ENCODE measurements at regions of chr17 and their contacts with region 1.

Region 1: DNA sequence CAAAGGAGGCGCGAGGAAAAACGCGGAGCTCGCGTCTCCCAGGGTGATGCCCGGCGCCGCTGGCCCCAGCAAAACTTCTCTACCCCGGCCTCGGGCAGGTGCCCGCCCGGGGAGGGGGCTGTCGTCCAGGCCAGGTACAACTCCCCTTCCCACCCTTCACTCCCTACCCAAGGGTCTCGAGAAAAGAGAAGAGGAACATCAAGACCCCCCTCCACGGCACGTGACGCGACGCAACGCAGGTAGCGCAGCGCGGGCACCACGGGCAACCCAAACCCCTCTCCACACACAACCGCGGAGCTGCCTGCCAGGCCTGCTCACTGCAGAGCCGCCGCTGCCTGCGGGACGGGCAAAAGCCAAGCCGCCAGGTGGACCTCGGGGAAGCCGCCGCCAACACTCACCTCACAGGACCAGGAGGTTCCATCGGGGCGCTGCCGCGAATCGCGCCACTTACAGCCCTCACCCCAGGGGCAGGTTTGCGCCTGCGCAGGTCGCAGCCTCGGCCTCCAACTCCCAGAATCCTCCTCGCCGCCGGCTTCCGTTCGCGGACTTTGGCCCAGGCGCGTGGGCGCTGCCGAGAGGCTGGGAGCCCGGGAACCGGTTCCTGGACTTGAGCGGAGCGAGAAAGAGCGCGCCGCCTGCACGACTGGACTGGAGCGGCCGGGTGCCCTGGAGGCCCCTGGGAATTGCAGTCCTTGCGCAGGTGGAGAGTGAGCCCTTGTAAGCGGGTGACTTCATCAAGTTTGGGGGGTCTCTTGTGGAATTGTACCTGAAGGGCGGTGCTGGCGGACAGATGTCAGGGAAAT is at the start of gene ZNF232:
- DNase-seq: peak; percentile 97 to 99
- H3K4me3 ChIP-seq: peak within 1 kb of the TSS; percentile 66 to 92 (median 89)
- H3K27ac ChIP-seq: peak within 1 kb of the TSS; percentile 69 to 84 (median 81)
- H3K4me1 ChIP-seq: peaks cover 10 to 26% (median 19%) of the 10 kb centered on the region in 4 donors
- H3K27me3 ChIP-seq: peaks cover 7 to 24% (median 24%) of the 10 kb centered on the region in 3 donors
- CTCF ChIP-seq: peak in 1 of 7 experiments; percentile 31
- EP300 ChIP-seq: no peak
- POLR2A ChIP-seq: peak in 2 of 4 donors; percentile 10 to 40
- total RNA-seq, gene ZNF232: 0.58 to 8.0 (median 7.5) TPM

Region 2: DNA sequence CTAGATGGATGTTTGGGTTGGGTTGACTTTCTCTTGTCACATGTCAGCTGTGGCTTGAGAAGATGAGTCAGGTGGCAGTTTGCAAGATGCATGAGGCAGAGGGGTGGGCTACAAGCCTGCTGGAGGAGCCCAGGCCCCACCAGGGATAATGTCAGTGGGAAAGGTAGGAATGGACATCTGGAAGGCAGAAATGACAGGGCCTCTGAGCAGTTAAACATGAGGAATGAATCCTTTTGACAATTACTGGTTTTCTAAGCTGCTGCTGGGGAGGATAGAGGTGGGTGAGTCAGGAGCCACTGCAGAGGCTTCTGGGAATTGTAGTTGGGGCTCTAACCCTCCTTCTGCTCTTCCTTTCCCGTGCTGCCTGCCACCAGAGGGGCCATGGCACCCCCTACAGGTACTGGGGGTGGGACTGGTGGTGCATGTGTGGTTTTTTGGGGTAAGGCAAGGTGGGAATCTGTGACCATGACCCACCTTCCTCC is 92.1 kb before region 1 on chr17:
- intact Hi-C with region 1: no loop called
- DNase-seq: no peak
- H3K4me3 ChIP-seq: no peak overlapping the region
- H3K27ac ChIP-seq: no peak overlapping the region
- H3K4me1 ChIP-seq: peaks cover 0 to 9% (median 7%) of the 10 kb centered on the region in 4 donors
- H3K27me3 ChIP-seq: no peaks in the 10 kb centered on the region
- CTCF ChIP-seq: no peak
- EP300 ChIP-seq: no peak
- POLR2A ChIP-seq: no peak

Region 3: GRCh38 chr17:5049314-5049895 is 62.2 kb before region 1 on chr17:
- intact Hi-C with region 1: no loop called
- DNase-seq: peak; percentile 32 to 60
- H3K4me3 ChIP-seq: no peak overlapping the region
- H3K27ac ChIP-seq: peak overlapping the region; percentile 42 to 79 (median 66)
- H3K4me1 ChIP-seq: peaks cover 0 to 21% (median 9%) of the 10 kb centered on the region in 4 donors
- H3K27me3 ChIP-seq: no peaks in the 10 kb centered on the region
- CTCF ChIP-seq: no peak
- EP300 ChIP-seq: no peak
- POLR2A ChIP-seq: no peak

Region 4: DNA sequence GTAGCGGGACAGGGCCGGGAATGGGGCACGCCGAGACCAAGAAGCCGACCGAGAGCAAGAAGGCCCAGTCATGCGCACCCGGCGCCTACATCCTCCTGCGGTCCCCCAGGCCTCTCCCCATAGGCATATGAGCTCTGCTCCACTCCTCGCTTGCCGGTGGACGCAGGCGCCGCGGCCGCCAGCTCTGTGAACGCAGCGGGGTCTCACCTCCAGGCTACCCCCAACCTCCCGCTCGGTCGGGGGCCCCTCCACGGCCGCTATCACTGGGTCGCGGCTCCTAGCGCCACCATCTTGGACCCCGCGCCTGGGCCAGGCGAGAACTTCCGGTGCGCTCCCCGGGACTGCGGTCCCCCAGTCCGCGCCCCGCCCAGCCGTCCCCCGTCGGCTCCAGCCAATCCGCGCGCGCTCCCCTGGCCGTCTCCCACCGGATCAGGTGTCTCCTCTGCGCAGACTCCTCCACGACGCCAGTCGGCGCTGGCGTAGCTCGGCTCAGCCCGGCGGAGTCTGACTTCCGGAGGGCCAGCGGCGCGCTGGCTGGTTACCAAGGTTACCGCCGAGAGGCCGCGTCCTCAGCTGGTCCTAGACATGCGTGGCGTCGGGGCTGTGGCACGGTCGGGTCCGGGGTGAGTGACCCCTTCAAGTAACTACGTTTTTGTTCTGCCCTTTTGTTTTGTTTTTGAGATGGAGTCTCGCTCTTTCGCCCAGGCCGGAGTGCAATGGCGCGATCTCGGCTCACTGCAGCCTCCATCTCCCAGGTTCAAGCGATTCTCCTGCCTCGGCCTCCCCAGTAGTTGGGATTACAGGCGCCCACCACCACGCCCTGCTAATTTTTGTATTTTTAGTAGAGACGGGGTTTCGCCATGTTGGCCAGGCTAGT is 80.2 kb after region 1 on chr17 and contains the start of gene ZNF594:
- intact Hi-C with region 1: loop called (anchors 10 kb)
- DNase-seq: peak; percentile 97 to 99
- H3K4me3 ChIP-seq: peak within 1 kb of the TSS; percentile 78 to 91 (median 89)
- H3K27ac ChIP-seq: peak within 1 kb of the TSS; percentile 55 to 88 (median 83)
- H3K4me1 ChIP-seq: peaks cover 6 to 24% (median 21%) of the 10 kb centered on the region in 4 donors
- H3K27me3 ChIP-seq: no peaks in the 10 kb centered on the region
- CTCF ChIP-seq: peak in 5 of 7 experiments; percentile 53 to 71 (median 59)
- EP300 ChIP-seq: no peak
- POLR2A ChIP-seq: no peak
- total RNA-seq, gene ZNF594: 5.8 to 73.5 (median 10.0) TPM

Measured in stomach (tissue), 19 donors.